CD14-positive monocyte (primary cell): ENCODE measurements at regions of chr2 and their contacts with region 1.

Region 1: DNA sequence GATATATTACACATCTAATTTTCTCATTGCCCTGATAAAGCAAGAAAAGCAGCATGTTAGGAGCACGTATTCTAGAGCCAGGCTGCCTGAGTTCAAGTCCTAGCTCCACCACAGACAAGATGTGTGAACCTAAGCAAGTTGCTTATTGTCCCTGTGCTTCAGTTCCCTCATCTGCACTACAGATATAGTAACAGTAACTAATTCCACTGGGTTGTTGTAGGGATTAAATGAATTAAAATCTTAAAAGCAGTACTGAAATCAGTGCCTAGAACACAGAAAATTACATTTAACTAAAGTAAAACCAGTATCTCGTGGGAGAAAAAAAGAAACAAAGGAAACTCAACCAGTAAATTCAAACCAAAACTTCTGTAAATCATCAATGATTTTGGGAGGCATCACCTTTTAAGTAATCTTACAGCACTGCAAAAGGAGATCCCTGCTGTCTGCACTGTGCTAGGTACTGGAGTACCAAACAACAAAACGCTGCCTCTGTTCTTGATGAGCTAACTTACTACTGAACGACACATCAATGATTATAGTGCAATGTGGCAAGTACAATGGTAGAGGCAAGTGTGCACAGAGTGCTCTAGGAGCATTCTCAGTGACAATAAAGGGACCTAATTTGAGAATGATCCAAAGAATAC is 7.9 kb downstream of the MAP3K2 start:
- DNase-seq: no peak
- H3K4me3 ChIP-seq: no peak overlapping the region
- H3K4me3 Mint-ChIP-seq: no peak overlapping the region
- H3K27ac ChIP-seq: peak overlapping the region in 1 of 2 donors; percentile 26
- H3K27ac Mint-ChIP-seq: peak overlapping the region in 1 of 7 donors; percentile 26
- H3K4me1 ChIP-seq: peaks cover 10 to 20% of the 10 kb centered on the region in 2 donors
- H3K4me1 Mint-ChIP-seq: peaks cover 43% of the 10 kb centered on the region
- H3K27me3 ChIP-seq: no peaks in the 10 kb centered on the region
- H3K27me3 Mint-ChIP-seq: no peaks in the 10 kb centered on the region
- CTCF ChIP-seq: no peak

Region 2: GRCh38 chr2:127342101-127342500 is 37.7 kb before region 1 on chr2:
- intact Hi-C with region 1: loop called in 1 of 2 experiments (anchors 5 kb)
- DNase-seq: peak in 2 of 3 donors; percentile 18 to 37
- H3K4me3 ChIP-seq: no peak overlapping the region
- H3K4me3 Mint-ChIP-seq: no peak overlapping the region
- H3K27ac ChIP-seq: peak overlapping the region in 1 of 2 donors; percentile 55
- H3K27ac Mint-ChIP-seq: peak overlapping the region; percentile 24 to 80 (median 69)
- H3K4me1 ChIP-seq: no peaks in the 10 kb centered on the region
- H3K4me1 Mint-ChIP-seq: peaks cover 3% of the 10 kb centered on the region
- H3K27me3 ChIP-seq: no peaks in the 10 kb centered on the region
- H3K27me3 Mint-ChIP-seq: no peaks in the 10 kb centered on the region
- CTCF ChIP-seq: no peak

Region 3: GRCh38 chr2:127531221-127531648 is 151.4 kb after region 1 on chr2:
- intact Hi-C with region 1: no loop called
- DNase-seq: no peak
- H3K4me3 ChIP-seq: no peak overlapping the region
- H3K4me3 Mint-ChIP-seq: no peak overlapping the region
- H3K27ac ChIP-seq: no peak overlapping the region
- H3K27ac Mint-ChIP-seq: no peak overlapping the region
- H3K4me1 ChIP-seq: peaks cover 8 to 10% of the 10 kb centered on the region in 2 donors
- H3K4me1 Mint-ChIP-seq: peaks cover 9% of the 10 kb centered on the region
- H3K27me3 ChIP-seq: no peaks in the 10 kb centered on the region
- H3K27me3 Mint-ChIP-seq: peaks cover 0 to 6% (median 4%) of the 10 kb centered on the region in 3 donors
- CTCF ChIP-seq: no peak